GM12878 (cell line): ENCODE measurements at regions of chr12 and their contacts with region 1.

Region 1: GRCh38 chr12:109597795-109598427 is 24.3 kb downstream of the MVK start:
- DNase-seq: no peak
- ATAC-seq: peak; percentile 89
- H3K4me3 ChIP-seq: no peak overlapping the region
- H3K27ac ChIP-seq: no peak overlapping the region
- H3K4me1 ChIP-seq: peaks cover 4% of the 10 kb centered on the region; the same call in 1 of the 2 replicates
- H3K27me3 ChIP-seq: no peaks in the 10 kb centered on the region
- CTCF ChIP-seq: peak; percentile 77 to 98 (median 94)
- EP300 ChIP-seq: no peak
- POLR2A ChIP-seq: 0 out of 2 replicates have a peak, but pooled peaks have one; percentile 27
- RAD21 ChIP-seq: peak; percentile 63

Region 2: GRCh38 chr12:109573029-109573913 is 24.6 kb before region 1 on chr12 and contains the starts of genes MMAB and MVK:
- CTCF ChIA-PET with region 1: interaction called, 14 read pairs
- POLR2A ChIA-PET with region 1: interaction called, 4 read pairs
- RAD21 ChIA-PET with region 1: no interaction called
- SMC1A ChIA-PET with region 1: interaction called, 3 read pairs
- in situ Hi-C with region 1: no loop called
- intact Hi-C with region 1: no loop called
- DNase-seq: peak; percentile 99
- ATAC-seq: peak; percentile 98
- H3K4me3 ChIP-seq: peak within 1 kb of the TSS; percentile 99
- H3K27ac ChIP-seq: peak within 1 kb of the TSS; percentile 88
- H3K4me1 ChIP-seq: no peaks in the 10 kb centered on the region
- H3K27me3 ChIP-seq: no peaks in the 10 kb centered on the region
- CTCF ChIP-seq: no peak
- EP300 ChIP-seq: no peak
- POLR2A ChIP-seq: peak; percentile 95
- RAD21 ChIP-seq: no peak
- polyA plus RNA-seq, gene MMAB: 10.6 to 28.6 TPM
- polyA plus RNA-seq, gene MVK: 0.24 to 2.8 TPM

Region 3: GRCh38 chr12:109611223-109611622 is 13.3 kb after region 1 on chr12:
- CTCF ChIA-PET with region 1: interaction called, 13 read pairs
- POLR2A ChIA-PET with region 1: no interaction called
- RAD21 ChIA-PET with region 1: no interaction called
- SMC1A ChIA-PET with region 1: no interaction called
- in situ Hi-C with region 1: no loop called
- intact Hi-C with region 1: no loop called
- DNase-seq: no peak
- ATAC-seq: no peak
- H3K4me3 ChIP-seq: no peak overlapping the region
- H3K27ac ChIP-seq: no peak overlapping the region
- H3K4me1 ChIP-seq: no peaks in the 10 kb centered on the region
- H3K27me3 ChIP-seq: peaks cover 5 to 6% of the 10 kb centered on the region in 2 experiments
- CTCF ChIP-seq: no peak
- EP300 ChIP-seq: no peak
- POLR2A ChIP-seq: no peak
- RAD21 ChIP-seq: no peak

Region 4: GRCh38 chr12:109739747-109740693 is 142.1 kb after region 1 on chr12:
- CTCF ChIA-PET with region 1: interaction called, 11 read pairs
- POLR2A ChIA-PET with region 1: no interaction called
- RAD21 ChIA-PET with region 1: no interaction called
- SMC1A ChIA-PET with region 1: no interaction called
- in situ Hi-C with region 1: no loop called
- intact Hi-C with region 1: no loop called
- DNase-seq: no peak
- ATAC-seq: peak; percentile 34; the same call in 2 of the 3 replicates
- H3K4me3 ChIP-seq: no peak overlapping the region
- H3K27ac ChIP-seq: no peak overlapping the region
- H3K4me1 ChIP-seq: no peaks in the 10 kb centered on the region
- H3K27me3 ChIP-seq: no peaks in the 10 kb centered on the region; a peak in 3 of 4 replicates
- CTCF ChIP-seq: peak in 2 of 3 experiments; percentile 22 to 35; a peak in 3 of 6 replicates
- EP300 ChIP-seq: no peak
- POLR2A ChIP-seq: no peak
- RAD21 ChIP-seq: 0 out of 2 replicates have a peak, but pooled peaks have one; percentile 6

Region 5: GRCh38 chr12:110176745-110177144 is 578.8 kb after region 1 on chr12:
- CTCF ChIA-PET with region 1: no interaction called
- POLR2A ChIA-PET with region 1: no interaction called
- RAD21 ChIA-PET with region 1: no interaction called
- SMC1A ChIA-PET with region 1: no interaction called
- in situ Hi-C with region 1: no loop called
- intact Hi-C with region 1: no loop called
- DNase-seq: no peak
- ATAC-seq: no peak
- H3K4me3 ChIP-seq: no peak overlapping the region
- H3K27ac ChIP-seq: no peak overlapping the region
- H3K4me1 ChIP-seq: no peaks in the 10 kb centered on the region
- H3K27me3 ChIP-seq: no peaks in the 10 kb centered on the region
- CTCF ChIP-seq: no peak
- EP300 ChIP-seq: no peak
- POLR2A ChIP-seq: no peak
- RAD21 ChIP-seq: no peak